ENCODE measurements at regions of chr6 and their contacts with region 1.

Region 1: DNA sequence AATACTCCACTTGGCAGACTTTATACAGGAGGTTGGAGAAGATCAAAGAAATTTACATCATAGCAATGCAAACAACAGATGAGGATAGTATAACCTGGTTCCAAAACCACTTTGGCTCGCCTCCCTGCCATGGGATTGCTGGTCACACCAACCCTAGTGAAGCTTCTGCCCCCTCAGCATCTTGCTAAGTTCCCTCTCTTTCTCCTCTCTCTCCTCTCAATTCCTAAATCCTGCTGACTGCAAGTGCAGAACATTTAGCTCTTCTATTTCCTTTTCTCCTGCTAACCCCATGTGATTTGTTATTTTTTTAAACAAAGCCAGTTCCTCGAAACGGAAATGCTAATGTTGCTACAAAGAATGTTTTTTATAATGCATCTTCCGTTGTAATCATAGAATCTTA is 50.3 kb upstream of the LY86 start:
- H3K4me3 Mint-ChIP-seq: no peak overlapping the region
- H3K27ac Mint-ChIP-seq: peak overlapping the region; percentile 80
- H3K4me1 Mint-ChIP-seq: peaks cover 50% of the 10 kb centered on the region
- H3K27me3 Mint-ChIP-seq: peaks cover 37% of the 10 kb centered on the region

Region 2: GRCh38 chr6:6503191-6503590 is 35.1 kb before region 1 on chr6:
- intact Hi-C with region 1: loop called (anchors 5 kb)
- H3K4me3 Mint-ChIP-seq: peak overlapping the region; percentile 17
- H3K27ac Mint-ChIP-seq: peak overlapping the region; percentile 67
- H3K4me1 Mint-ChIP-seq: peaks cover 60% of the 10 kb centered on the region
- H3K27me3 Mint-ChIP-seq: peaks cover 2% of the 10 kb centered on the region

Region 3: GRCh38 chr6:6569481-6570167 is 31.4 kb after region 1 on chr6:
- intact Hi-C with region 1: no loop called
- H3K4me3 Mint-ChIP-seq: no peak overlapping the region
- H3K27ac Mint-ChIP-seq: no peak overlapping the region
- H3K4me1 Mint-ChIP-seq: peaks cover 13% of the 10 kb centered on the region
- H3K27me3 Mint-ChIP-seq: no peaks in the 10 kb centered on the region

Region 4: DNA sequence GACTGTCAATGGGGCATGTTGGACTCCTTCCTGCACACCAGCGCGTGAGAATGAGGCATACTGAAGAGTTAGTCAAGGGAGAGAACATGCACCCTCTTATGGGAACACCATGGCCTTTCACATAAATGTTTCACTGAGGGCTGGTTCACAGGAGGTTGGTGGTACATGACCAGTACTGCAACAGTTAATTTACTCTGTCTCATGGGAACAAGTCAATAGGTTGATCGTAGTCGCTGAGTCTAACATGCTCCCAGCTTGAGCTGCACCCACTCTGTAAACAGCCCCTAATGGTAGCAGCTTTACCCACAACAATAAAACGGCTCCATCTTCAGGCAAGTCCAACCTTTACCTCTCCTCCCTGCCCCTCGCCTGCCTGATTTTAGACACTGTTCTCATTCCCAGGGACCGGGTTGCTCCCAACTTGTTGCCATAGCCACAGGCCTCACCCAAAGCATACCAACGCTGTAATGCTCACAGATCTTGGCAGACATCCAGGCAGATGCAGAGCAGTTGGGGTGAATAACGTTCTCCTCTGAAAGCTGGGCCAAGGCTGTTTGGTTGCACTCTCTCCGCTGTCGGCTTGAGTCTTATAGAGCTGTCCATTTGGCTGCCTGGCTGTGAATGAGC is 161.6 kb after region 1 on chr6:
- intact Hi-C with region 1: no loop called
- H3K4me3 Mint-ChIP-seq: no peak overlapping the region
- H3K27ac Mint-ChIP-seq: peak overlapping the region; percentile 63
- H3K4me1 Mint-ChIP-seq: peaks cover 81% of the 10 kb centered on the region
- H3K27me3 Mint-ChIP-seq: no peaks in the 10 kb centered on the region

Region 5: GRCh38 chr6:6927521-6928371 is 389.5 kb after region 1 on chr6:
- intact Hi-C with region 1: no loop called
- H3K4me3 Mint-ChIP-seq: peak overlapping the region; percentile 43
- H3K27ac Mint-ChIP-seq: peak overlapping the region; percentile 68
- H3K4me1 Mint-ChIP-seq: peaks cover 62% of the 10 kb centered on the region
- H3K27me3 Mint-ChIP-seq: no peaks in the 10 kb centered on the region